ENCODE measurements at regions of chr1 and their contacts with region 1.

Region 1: GRCh38 chr1:109910123-109910962 is at the start of gene CSF1:
- DNase-seq: peak; percentile 86 to 95 (median 93)
- H3K4me3 ChIP-seq: peak within 1 kb of the TSS; percentile 31 to 84 (median 62)
- H3K27ac ChIP-seq: peak within 1 kb of the TSS in 4 of 5 donors; percentile 49 to 83 (median 80)
- H3K4me1 ChIP-seq: peaks cover 32 to 48% of the 10 kb centered on the region in 2 donors
- H3K27me3 ChIP-seq: no peaks in the 10 kb centered on the region
- CTCF ChIP-seq: no peak
- POLR2A ChIP-seq: peak; percentile 85 to 87
- total RNA-seq, gene CSF1: 3.8 to 295 (median 101) TPM

Region 2: DNA sequence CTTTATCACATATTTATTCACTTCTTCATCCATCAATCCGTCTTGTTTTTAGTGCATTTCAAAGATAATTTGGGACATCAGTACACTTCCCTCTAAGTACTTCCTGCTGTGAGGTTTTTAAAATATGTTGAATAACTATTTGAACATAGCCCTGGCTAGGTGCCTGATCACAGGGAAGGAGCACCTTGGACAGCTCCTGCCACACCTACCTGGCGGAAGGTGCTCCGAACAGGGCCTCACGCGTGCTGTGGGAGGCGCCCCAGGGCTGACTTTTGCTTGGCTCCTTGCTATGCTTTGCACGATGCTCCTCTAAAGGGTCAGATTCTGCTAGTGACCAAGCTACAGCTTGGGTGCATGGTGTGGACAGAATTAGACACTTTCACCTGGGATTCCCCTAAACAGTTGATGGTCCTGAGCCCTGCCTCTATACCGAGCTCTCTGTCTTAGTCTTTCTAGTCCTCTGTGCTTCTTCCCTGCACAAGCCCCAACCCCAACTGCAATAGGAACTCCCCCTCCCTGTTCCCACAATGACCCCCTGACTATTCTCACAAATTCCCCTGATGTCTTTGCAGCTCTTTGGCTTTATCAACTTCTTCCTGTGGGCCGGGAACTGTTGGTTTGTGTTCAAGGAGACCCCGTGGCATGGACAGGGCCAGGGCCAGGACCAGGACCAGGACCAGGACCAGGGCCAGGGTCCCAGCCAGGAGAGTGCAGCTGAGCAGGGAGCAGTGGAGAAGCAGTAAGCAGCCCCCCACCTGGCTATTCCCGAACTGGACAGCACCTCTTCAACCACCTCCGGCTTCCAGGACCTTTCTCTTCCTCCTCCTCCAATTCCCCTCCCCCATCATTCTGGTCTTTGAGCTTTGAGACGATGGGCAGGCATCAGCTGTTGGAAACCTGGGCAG is 431.3 kb before region 1 on chr1:
- intact Hi-C with region 1: no loop called
- DNase-seq: peak in 3 of 7 donors; percentile 13 to 41 (median 17)
- H3K4me3 ChIP-seq: no peak overlapping the region
- H3K27ac ChIP-seq: no peak overlapping the region
- H3K4me1 ChIP-seq: peaks cover 4 to 6% of the 10 kb centered on the region in 2 donors
- H3K27me3 ChIP-seq: no peaks in the 10 kb centered on the region
- CTCF ChIP-seq: no peak
- POLR2A ChIP-seq: no peak

Region 3: GRCh38 chr1:109790735-109791494 is 119.4 kb before region 1 on chr1:
- intact Hi-C with region 1: loop called (anchors 5 to 10 kb)
- DNase-seq: peak in 6 of 7 donors; percentile 29 to 65 (median 42)
- H3K4me3 ChIP-seq: no peak overlapping the region
- H3K27ac ChIP-seq: no peak overlapping the region
- H3K4me1 ChIP-seq: peaks cover 11 to 35% of the 10 kb centered on the region in 2 donors
- H3K27me3 ChIP-seq: no peaks in the 10 kb centered on the region
- CTCF ChIP-seq: peak in 4 of 6 experiments; percentile 14 to 34 (median 16)
- POLR2A ChIP-seq: no peak

Region 4: GRCh38 chr1:109838838-109839240 is 71.5 kb before region 1 on chr1:
- intact Hi-C with region 1: loop called in 1 of 2 experiments (anchors 10 kb)
- DNase-seq: peak; percentile 54 to 82 (median 68)
- H3K4me3 ChIP-seq: no peak overlapping the region
- H3K27ac ChIP-seq: peak overlapping the region in 1 of 5 donors; percentile 40
- H3K4me1 ChIP-seq: no peaks in the 10 kb centered on the region
- H3K27me3 ChIP-seq: no peaks in the 10 kb centered on the region
- CTCF ChIP-seq: no peak
- POLR2A ChIP-seq: no peak

Measured in adrenal gland (tissue), 19 donors.